ENCODE measurements at regions of chr2 and their contacts with region 1.

Region 1: GRCh38 chr2:178072383-178073301 is at the start of gene PDE11A:
- DNase-seq: peak; percentile 88
- H3K4me3 ChIP-seq: peak within 1 kb of the TSS; percentile 32 to 53 (median 47)
- H3K27ac ChIP-seq: peak within 1 kb of the TSS in 3 of 4 donors; percentile 34 to 62 (median 58)
- H3K4me1 ChIP-seq: peaks cover 0 to 16% (median 10%) of the 10 kb centered on the region in 4 donors
- H3K27me3 ChIP-seq: no peaks in the 10 kb centered on the region
- CTCF ChIP-seq: no peak
- EP300 ChIP-seq: no peak
- POLR2A ChIP-seq: peak in 1 of 2 donors; percentile 58
- total RNA-seq, gene PDE11A: 2.6 to 16.8 (median 5.0) TPM

Region 2: DNA sequence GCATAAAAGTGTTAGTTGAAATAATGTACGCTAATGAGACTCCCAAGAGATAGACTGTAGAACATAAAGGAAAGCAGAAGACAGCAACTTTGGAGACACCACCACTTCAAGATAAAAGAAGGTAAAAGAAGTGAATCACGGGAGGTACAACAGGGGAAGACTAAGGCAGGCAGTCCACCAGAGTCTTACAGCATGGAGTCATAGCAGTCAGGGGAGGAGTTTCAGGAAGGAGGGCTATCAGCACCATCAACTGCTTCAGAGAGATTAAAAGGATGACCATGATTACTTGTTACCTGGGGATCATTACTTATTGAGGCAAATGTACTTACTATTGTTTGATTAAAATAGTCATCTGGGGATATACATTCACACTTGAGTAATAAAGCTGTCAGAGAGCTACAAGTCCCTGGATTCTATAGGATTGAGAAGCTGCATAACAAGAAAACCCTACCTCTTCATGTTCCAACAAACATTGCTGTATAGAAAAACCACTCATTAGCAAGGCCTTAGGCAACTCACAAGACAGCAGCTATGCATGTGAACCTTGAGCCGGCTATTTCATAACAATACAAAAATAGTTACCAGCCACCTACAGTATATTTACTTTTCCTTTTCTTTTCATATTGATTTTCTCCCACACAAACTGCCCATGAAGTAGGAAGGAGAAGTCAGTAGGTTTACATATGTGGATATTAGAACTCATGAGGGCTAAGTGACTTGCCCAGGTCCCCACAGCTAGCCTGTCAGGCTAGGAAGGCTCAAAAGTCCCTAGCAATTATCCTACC is 101.8 kb before region 1 on chr2:
- intact Hi-C with region 1: no loop called
- DNase-seq: no peak
- H3K4me3 ChIP-seq: no peak overlapping the region
- H3K27ac ChIP-seq: no peak overlapping the region
- H3K4me1 ChIP-seq: no peaks in the 10 kb centered on the region
- H3K27me3 ChIP-seq: no peaks in the 10 kb centered on the region
- CTCF ChIP-seq: no peak
- EP300 ChIP-seq: no peak
- POLR2A ChIP-seq: no peak

Region 3: DNA sequence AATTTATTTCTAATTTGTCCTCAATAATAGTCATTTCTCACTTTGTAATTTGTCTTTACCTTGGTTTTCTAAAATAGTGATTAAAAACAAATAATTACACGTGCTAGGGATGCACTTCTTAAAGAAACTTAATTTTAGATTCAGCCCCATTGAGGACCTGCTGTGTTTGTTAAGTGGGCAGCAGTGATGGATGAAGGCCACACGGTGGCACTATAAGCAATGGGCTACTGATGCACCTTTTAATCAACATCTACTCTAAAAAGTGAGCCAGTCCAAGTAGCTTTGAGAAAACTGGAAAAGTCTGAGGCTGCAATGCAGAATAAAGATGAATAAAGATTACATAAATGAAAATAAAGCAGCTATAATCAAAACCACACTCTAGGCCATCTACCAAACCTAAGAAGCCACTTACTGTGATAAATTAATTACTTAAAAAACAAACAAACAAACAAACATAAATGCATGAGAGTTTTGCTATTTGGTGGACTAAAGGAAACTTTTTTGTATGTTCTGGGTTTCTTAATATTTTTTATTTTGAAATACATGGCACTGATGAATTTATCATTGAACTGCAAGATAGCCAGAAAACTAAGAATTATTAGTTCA is 89.4 kb before region 1 on chr2:
- intact Hi-C with region 1: loop called (anchors 10 kb)
- DNase-seq: no peak
- H3K4me3 ChIP-seq: no peak overlapping the region
- H3K27ac ChIP-seq: no peak overlapping the region
- H3K4me1 ChIP-seq: no peaks in the 10 kb centered on the region
- H3K27me3 ChIP-seq: no peaks in the 10 kb centered on the region
- CTCF ChIP-seq: peak in 3 of 4 experiments; percentile 33 to 59 (median 47)
- EP300 ChIP-seq: no peak
- POLR2A ChIP-seq: no peak

Region 4: DNA sequence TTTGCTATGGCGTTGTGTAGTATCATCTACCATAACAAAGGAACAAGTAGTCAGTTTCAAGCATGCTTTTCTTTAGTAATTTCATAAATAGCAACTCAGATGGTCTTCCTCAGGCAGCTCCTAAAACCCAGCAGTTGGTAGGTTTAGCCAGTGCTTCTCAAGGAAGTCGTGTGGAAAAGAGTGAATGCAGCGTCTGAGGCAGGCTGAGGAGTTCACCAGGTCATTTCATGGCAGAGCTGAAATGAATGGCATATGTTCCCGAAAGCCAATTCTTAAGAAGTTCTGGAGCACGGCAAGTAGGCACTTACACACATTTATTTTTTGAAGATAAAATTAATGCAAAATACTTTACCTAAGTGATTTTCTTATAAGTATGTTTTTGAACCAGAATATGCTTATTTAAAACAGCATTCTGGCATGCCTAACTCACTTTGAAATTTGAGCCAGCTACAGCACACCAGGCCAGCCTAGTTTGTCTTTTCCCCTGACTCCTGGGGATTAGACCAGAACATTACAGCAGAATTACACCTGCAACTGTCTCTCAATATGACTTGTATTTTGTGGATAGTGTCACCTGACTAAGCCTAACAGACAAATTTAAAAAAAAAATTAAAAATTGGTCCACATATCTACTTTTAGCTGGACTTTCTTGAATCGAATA is 183.9 kb after region 1 on chr2:
- intact Hi-C with region 1: no loop called
- DNase-seq: no peak
- H3K4me3 ChIP-seq: no peak overlapping the region
- H3K27ac ChIP-seq: no peak overlapping the region
- H3K4me1 ChIP-seq: no peaks in the 10 kb centered on the region
- H3K27me3 ChIP-seq: no peaks in the 10 kb centered on the region
- CTCF ChIP-seq: no peak
- EP300 ChIP-seq: no peak
- POLR2A ChIP-seq: no peak